AG04449 (cell line): ENCODE measurements at regions of chr3 and their contacts with region 1.

Region 1: DNA sequence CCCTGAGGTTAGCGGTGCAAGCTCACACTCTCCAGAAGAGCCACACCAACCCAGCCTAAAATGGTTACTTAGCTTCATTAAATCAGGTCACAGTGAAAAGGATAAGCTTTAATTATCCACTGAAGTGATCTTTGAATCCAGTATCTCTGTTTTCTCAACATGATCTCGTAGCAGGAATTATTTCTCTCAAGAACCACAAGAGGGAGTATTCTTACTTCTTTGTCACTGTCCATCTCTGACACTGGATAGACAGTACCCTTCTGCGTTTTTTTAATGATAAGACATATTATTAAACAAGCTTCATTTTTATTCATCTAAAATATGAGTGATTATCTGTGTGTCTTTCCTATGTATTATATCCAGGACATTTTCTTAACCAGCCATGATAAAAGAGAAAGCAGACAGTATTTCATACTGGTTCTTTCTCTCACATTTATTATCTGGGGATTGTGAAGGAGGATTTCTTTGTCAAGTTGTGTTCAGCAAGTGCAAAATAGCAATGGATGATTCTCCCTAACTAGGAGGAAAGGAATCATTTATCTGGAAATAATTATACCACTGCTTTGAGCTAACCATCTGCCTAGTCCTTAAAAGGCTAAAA is 105.4 kb upstream of the CCDC54 start:
- DNase-seq: peak; percentile 10
- H3K4me3 ChIP-seq: no peak overlapping the region
- CTCF ChIP-seq: peak; percentile 31

Region 2: GRCh38 chr3:107251819-107252218 is 20.1 kb before region 1 on chr3:
- CTCF ChIA-PET with region 1: interaction called, 36 read pairs
- POLR2A ChIA-PET with region 1: no interaction called
- DNase-seq: no peak
- H3K4me3 ChIP-seq: no peak overlapping the region
- CTCF ChIP-seq: no peak

Region 3: DNA sequence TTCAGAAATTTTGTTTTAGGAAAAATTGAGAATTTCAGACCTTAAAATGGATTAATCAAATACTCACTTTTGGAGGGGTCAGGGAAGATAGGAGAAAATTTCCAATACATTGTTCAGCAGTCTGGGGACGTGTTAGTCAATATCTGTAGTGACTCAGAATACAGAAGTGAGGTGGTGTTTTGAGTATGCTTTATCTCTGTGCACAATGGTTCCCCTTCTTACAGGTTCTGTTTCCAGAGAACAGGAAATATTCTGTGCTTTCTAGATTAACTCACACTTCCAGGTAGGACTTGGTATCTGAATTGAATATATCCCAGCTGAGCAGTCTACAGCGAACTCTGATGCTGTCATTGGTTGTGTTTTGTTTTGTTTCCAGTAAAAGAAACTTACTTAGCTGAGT is 74.7 kb after region 1 on chr3:
- CTCF ChIA-PET with region 1: interaction called, 11 read pairs
- POLR2A ChIA-PET with region 1: no interaction called
- DNase-seq: no peak
- H3K4me3 ChIP-seq: no peak overlapping the region
- CTCF ChIP-seq: no peak

Region 4: DNA sequence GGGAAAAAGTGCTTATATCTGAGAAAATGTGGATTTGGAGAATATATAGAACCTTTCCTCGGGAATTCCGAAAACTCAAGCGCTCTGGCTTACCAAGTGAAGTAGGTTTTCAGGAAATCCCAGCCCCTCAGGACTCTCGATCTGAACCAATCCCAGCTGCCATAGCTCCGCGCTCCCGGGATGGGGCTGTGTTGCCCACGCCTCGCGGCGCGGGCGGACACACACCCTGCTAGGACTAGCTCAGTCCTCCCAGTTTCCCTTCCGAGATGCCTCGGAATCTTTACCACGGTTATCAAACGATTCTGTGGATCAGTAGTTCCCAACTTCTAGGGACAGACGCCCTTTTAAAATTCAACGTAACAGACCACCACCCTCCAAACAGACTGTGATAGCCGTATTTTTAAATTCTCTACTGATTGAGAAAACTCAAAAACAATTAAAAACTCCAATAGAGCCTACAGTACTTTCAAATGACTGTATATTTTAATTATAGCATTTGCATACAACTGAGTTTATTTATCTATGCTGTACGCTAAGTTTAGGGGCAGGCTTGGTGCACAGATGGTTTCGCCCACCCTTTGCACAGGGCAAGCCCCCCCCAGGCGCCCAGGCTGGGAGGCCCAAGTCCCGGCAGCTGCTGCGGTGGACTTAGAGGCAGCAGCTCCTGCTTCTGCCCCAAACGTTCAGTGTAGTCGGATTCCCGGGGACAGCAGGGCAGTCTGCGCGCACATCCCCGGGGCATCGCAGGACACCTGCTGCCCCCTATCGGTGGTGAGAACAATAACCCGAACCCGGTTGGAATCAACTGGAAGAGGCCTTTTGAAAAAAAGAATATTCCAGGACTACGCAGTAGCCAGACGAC is 157.7 kb after region 1 on chr3:
- CTCF ChIA-PET with region 1: interaction called, 287 read pairs
- POLR2A ChIA-PET with region 1: no interaction called
- DNase-seq: peak; percentile 59
- H3K4me3 ChIP-seq: peak overlapping the region; percentile 56
- CTCF ChIP-seq: peak; percentile 84

Region 5: DNA sequence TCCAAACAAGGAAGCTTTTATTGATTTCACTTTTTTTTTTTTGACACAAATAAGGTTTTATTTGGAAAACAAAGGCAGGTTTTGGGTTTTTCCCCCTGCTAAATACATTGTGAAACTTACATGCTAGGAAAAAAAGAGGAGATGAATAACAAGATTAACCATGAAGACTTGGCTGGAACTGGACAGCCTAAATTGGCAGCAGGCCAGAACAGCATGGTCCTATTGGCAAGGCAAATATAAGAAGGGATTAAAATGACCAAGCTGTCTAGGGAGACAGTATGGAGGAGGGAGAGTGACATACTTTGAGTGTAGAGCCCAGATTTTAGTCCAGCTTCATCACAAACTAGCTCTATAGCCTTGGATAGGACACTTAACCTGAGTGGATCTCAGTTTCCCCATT is 187.0 kb after region 1 on chr3:
- CTCF ChIA-PET with region 1: interaction called, 26 read pairs
- POLR2A ChIA-PET with region 1: no interaction called
- DNase-seq: no peak
- H3K4me3 ChIP-seq: no peak overlapping the region
- CTCF ChIP-seq: no peak

Region 6: GRCh38 chr3:107740992-107741896 is 469.4 kb after region 1 on chr3:
- CTCF ChIA-PET with region 1: interaction called, 10 read pairs
- POLR2A ChIA-PET with region 1: no interaction called
- DNase-seq: no peak
- H3K4me3 ChIP-seq: no peak overlapping the region
- CTCF ChIP-seq: peak; percentile 13